Activated CD4-positive, alpha-beta memory T cell treated with anti-CD3 and anti-CD28 coated beads for 36 hours (primary cell): ENCODE measurements at regions of chr14 and their contacts with region 1.

Region 1: DNA sequence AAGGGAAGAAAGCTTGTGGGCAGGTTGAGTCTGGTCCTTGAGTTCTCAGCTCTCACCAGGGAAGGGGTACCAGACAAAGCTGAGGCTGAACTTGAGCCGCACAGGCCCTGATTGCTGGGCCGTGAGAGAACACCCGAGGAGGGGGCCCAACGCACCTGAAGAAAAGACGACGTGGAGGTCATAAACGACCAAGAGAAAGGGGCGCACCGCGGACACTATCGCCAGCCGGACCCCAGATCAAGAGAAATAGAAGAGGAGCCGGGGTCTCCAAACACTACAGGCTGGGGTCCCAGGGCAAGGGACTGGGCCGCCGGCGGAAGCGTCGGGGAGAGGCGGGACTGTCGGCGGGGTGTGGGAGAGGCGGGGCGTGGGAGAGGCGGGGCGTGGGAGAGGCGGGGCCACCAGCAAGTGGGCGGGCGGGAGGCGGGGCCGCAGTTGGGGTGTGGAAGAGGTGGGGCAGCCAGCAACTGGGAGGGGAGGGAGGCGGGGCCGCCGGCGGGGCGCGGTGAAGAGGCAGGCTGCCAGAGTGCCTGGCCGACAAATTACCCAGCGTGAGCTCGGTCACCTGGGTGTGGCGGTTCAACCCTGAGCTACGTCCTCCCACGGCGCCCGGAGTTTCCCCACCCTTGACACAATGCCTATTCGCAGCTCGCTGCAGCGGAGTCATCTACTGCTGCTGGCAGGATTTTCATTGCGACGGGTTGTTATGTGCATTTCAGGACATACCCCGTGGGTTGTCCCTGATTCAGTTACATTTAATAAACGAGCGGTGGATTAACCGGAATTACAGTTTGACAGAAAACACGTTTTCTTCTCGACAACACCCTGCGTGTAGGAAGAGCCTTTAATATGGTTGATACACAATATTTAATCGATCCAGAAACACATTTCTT is 15.5 kb upstream of the NEMF start:
- DNase-seq: peak; percentile 99
- H3K4me3 Mint-ChIP-seq: peak overlapping the region; percentile 94
- H3K27ac Mint-ChIP-seq: peak overlapping the region; percentile 85
- H3K4me1 Mint-ChIP-seq: peaks cover 25% of the 10 kb centered on the region
- H3K27me3 Mint-ChIP-seq: no peaks in the 10 kb centered on the region

Region 2: GRCh38 chr14:49538926-49539325 is 329.2 kb before region 1 on chr14:
- CTCF ChIA-PET with region 1: no interaction called
- POLR2A ChIA-PET with region 1: no interaction called
- intact Hi-C with region 1: no loop called
- DNase-seq: no peak
- H3K4me3 Mint-ChIP-seq: no peak overlapping the region
- H3K27ac Mint-ChIP-seq: no peak overlapping the region
- H3K4me1 Mint-ChIP-seq: no peaks in the 10 kb centered on the region
- H3K27me3 Mint-ChIP-seq: no peaks in the 10 kb centered on the region

Region 3: DNA sequence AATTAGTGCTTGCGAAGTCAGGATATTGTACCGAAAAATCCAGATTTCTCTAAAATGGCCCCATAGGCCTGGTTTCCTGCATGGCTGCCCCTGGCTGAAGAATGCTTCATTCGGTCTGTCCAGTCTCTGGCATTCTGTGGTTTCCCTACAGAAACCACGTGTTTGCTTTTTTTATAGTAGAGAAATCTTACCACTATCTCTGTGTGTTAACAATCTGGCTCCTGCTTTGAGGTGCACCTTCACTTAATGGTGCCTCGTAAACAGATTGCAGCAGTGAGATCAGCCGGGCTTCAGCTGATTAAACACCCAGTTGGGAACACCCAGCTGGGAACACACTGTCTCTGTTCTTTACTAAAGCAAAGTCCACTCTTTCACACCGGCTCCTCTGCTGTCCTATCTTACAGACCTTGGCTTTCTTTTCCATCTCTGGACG is 226.4 kb before region 1 on chr14:
- CTCF ChIA-PET with region 1: no interaction called
- POLR2A ChIA-PET with region 1: no interaction called
- intact Hi-C with region 1: no loop called
- DNase-seq: no peak
- H3K4me3 Mint-ChIP-seq: no peak overlapping the region
- H3K27ac Mint-ChIP-seq: peak overlapping the region; percentile 11
- H3K4me1 Mint-ChIP-seq: peaks cover 39% of the 10 kb centered on the region
- H3K27me3 Mint-ChIP-seq: no peaks in the 10 kb centered on the region

Region 4: DNA sequence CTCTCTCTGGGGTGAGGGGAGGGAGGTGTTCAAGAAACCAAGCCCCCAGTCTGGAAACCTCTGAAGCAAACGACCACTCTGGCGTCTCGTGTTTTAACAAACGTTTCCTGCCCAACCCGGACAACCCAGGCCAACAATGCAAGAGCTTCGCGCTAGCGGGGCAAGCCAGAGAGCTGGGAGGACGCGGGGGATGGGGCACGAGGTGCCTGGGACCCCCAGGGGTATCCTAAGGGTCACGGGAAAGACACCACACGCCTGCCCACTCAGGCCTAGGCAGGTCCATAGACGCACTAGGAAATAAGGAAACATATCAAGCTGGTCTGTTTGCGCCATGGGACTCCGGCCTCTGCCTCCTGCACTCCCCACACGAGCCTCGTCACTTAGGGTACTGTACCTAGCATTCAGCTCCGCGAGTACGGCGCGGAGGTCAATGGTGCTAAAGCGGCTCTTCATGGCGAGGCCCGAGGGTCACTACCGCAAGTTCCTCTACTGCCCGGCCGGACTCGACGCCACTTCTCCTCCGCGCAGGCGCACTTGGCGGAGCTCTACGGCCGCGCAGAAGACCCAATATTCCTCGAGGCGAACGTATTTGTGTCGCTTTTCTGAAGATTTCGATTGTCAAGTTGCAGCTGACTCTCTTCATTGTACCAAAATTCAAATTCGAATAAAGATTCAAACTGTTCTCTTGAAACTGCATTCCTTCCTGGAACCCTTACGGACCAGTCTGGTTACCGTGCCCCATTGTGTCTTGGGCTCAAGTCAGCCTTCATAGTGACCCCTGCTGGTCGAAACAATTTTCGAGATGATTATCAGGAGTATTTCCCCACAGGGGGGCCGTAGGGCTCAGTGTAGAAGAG is 15.5 kb before region 1 on chr14 and contains the start of gene NEMF:
- CTCF ChIA-PET with region 1: interaction called, 179 read pairs
- POLR2A ChIA-PET with region 1: interaction called, 38 read pairs
- intact Hi-C with region 1: no loop called
- DNase-seq: peak; percentile 88
- H3K4me3 Mint-ChIP-seq: peak within 1 kb of the TSS; percentile 98
- H3K27ac Mint-ChIP-seq: peak within 1 kb of the TSS; percentile 95
- H3K4me1 Mint-ChIP-seq: peaks cover 39% of the 10 kb centered on the region
- H3K27me3 Mint-ChIP-seq: no peaks in the 10 kb centered on the region
- total RNA-seq, gene NEMF: 63.6 to 71.0 TPM

Region 5: GRCh38 chr14:49897968-49898367 is 29.9 kb after region 1 on chr14:
- CTCF ChIA-PET with region 1: interaction called, 14 read pairs
- POLR2A ChIA-PET with region 1: interaction called, 55 read pairs
- intact Hi-C with region 1: loop called (anchors 1 kb)
- DNase-seq: no peak
- H3K4me3 Mint-ChIP-seq: peak overlapping the region; percentile 75
- H3K27ac Mint-ChIP-seq: peak overlapping the region; percentile 93
- H3K4me1 Mint-ChIP-seq: peaks cover 29% of the 10 kb centered on the region
- H3K27me3 Mint-ChIP-seq: no peaks in the 10 kb centered on the region

Region 6: DNA sequence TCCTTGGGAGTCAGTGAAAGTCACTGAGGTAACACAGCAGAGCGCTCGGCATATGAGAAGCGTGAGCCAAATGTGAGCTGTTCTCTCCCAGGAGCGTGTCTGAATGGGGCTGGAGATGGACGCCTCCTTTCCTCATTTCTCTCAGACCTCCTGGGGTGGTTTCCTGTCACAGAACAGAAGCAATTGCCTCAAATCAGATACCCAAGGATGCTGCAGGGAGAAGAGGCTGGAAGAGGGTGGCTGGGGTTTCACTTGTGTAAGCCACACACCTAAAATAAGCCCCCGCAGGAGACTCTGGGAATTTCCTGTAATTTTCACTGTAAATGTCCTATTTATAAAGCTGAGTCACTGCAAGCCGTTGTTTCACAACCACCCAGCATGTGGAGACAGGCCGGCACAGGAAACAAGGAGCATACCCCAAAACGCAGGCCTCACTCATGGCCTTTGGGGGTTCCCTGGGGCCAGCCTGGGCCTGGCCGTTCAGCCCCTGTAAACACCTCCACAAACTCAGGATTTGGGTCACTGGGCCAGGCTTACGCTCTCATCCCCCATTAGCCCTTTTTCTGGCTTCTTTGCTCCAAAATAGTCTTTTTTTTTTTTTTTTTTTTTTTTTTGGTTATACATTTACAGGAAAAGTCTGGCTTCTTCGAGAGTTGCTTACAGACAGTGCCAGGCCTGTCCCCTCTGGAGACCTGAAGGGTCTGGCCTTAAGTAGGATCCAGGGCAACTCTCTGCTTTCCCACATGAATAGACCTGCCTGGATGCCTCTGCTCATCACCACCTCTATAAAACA is 193.0 kb after region 1 on chr14:
- CTCF ChIA-PET with region 1: interaction called, 32 read pairs
- POLR2A ChIA-PET with region 1: interaction called, 32 read pairs
- intact Hi-C with region 1: loop called (anchors 1 kb)
- DNase-seq: peak; percentile 71
- H3K4me3 Mint-ChIP-seq: peak overlapping the region; percentile 96
- H3K27ac Mint-ChIP-seq: peak overlapping the region; percentile 99
- H3K4me1 Mint-ChIP-seq: peaks cover 73% of the 10 kb centered on the region
- H3K27me3 Mint-ChIP-seq: no peaks in the 10 kb centered on the region

Region 7: GRCh38 chr14:50109342-50109741 is 241.3 kb after region 1 on chr14:
- CTCF ChIA-PET with region 1: interaction called, 37 read pairs
- POLR2A ChIA-PET with region 1: interaction called, 4 read pairs
- intact Hi-C with region 1: loop called (anchors 1 kb)
- DNase-seq: no peak
- H3K4me3 Mint-ChIP-seq: no peak overlapping the region
- H3K27ac Mint-ChIP-seq: no peak overlapping the region
- H3K4me1 Mint-ChIP-seq: peaks cover 46% of the 10 kb centered on the region
- H3K27me3 Mint-ChIP-seq: no peaks in the 10 kb centered on the region